Esophagus muscularis mucosa (tissue), 4 donors: ENCODE measurements at regions of chr14 and their contacts with region 1.

Region 1: GRCh38 chr14:20855652-20856291 is 35.4 kb upstream of the RNASE3 start:
- DNase-seq: no peak
- H3K4me3 ChIP-seq: no peak overlapping the region
- H3K27ac ChIP-seq: no peak overlapping the region
- H3K4me1 ChIP-seq: peaks cover 0 to 12% (median 10%) of the 10 kb centered on the region in 4 donors
- H3K27me3 ChIP-seq: peaks cover 0 to 15% (median 0%) of the 10 kb centered on the region in 4 donors
- CTCF ChIP-seq: peak; percentile 57 to 60 (median 58)
- EP300 ChIP-seq: no peak
- POLR2A ChIP-seq: no peak

Region 2: DNA sequence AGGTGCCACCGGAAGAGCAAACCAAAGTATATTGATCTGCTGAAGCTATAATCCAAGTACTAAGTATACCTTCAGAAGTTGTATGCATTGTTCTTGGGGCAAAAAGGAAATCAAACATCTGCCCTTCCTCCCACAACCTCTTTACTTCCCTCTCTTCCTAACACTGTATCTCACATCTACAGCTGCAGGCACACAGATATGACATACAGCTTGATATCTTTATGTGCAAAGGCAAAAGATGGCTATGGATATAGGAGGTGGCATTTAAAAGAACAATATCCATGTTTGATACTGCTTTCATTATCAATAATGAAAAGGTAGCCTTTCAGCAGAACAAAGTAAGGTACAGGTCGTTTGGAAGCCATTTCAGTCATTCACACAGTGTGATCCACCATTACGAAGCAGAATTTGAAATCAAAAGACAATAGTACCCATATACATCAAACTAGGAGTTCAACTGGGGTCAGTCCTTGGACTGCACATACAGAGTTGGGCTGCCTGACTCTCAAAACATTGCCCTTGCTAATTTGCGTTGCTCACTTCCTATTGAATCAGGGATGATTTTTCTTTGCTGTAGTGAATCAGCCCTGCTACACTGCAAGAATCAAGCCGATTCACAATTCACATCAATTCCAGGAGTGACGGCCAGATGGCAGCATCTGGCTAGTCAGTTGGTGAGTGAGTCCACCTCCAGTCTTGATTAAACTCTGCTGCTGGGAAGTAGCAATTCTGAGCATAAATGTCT is 158.3 kb before region 1 on chr14:
- intact Hi-C with region 1: loop called (anchors 5 kb)
- DNase-seq: no peak
- H3K4me3 ChIP-seq: no peak overlapping the region
- H3K27ac ChIP-seq: no peak overlapping the region
- H3K4me1 ChIP-seq: no peaks in the 10 kb centered on the region
- H3K27me3 ChIP-seq: no peaks in the 10 kb centered on the region
- CTCF ChIP-seq: peak; percentile 53 to 61 (median 54)
- EP300 ChIP-seq: no peak
- POLR2A ChIP-seq: no peak

Region 3: GRCh38 chr14:20970983-20971704 is 115.4 kb after region 1 on chr14:
- intact Hi-C with region 1: loop called (anchors 1 kb)
- DNase-seq: peak; percentile 97
- H3K4me3 ChIP-seq: peak overlapping the region; percentile 54 to 71 (median 68)
- H3K27ac ChIP-seq: peak overlapping the region; percentile 68 to 82 (median 76)
- H3K4me1 ChIP-seq: peaks cover 4 to 15% (median 11%) of the 10 kb centered on the region in 4 donors
- H3K27me3 ChIP-seq: no peaks in the 10 kb centered on the region
- CTCF ChIP-seq: peak; percentile 66 to 88 (median 74)
- EP300 ChIP-seq: no peak
- POLR2A ChIP-seq: no peak

Region 4: GRCh38 chr14:21039585-21040369 is 184.0 kb after region 1 on chr14:
- intact Hi-C with region 1: loop called (anchors 10 kb)
- DNase-seq: no peak
- H3K4me3 ChIP-seq: peak overlapping the region in 2 of 4 donors; percentile 4 to 24
- H3K27ac ChIP-seq: peak overlapping the region; percentile 74 to 81 (median 77)
- H3K4me1 ChIP-seq: peaks cover 44 to 48% (median 44%) of the 10 kb centered on the region in 4 donors
- H3K27me3 ChIP-seq: no peaks in the 10 kb centered on the region
- CTCF ChIP-seq: peak; percentile 77 to 82 (median 81)
- EP300 ChIP-seq: no peak
- POLR2A ChIP-seq: no peak